Heart right ventricle (tissue), 16 donors: ENCODE measurements at regions of chr4 and their contacts with region 1.

Region 1: DNA sequence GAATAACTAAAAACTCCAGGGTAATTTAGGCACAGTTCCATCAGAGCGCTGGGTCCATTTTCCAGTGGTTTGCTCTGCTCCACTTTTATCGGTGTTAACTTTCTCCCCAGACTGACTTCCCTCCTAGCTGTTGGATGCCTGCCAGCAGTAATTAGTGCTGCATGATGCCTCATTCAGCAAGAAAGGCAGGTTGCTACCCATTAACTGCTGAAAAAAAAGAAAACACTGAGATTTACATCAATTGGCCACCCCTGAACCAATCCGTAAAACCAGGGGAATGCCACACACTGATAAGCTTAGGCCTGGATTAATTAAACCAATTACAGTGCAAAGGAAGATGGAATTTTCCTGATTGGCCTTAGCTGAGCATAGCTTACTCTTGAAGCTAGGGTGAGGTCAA is 182.4 kb upstream of the CXXC4 start:
- DNase-seq: no peak
- ATAC-seq: no peak
- H3K4me3 ChIP-seq: no peak overlapping the region
- H3K27ac ChIP-seq: no peak overlapping the region
- H3K4me1 ChIP-seq: no peaks in the 10 kb centered on the region
- H3K27me3 ChIP-seq: no peaks in the 10 kb centered on the region
- CTCF ChIP-seq: no peak

Region 2: GRCh38 chr4:104549736-104550135 is 127.4 kb before region 1 on chr4:
- intact Hi-C with region 1: loop called in 1 of 10 experiments (anchors 10 kb)
- DNase-seq: no peak
- ATAC-seq: no peak
- H3K4me3 ChIP-seq: no peak overlapping the region
- H3K27ac ChIP-seq: no peak overlapping the region
- H3K4me1 ChIP-seq: no peaks in the 10 kb centered on the region
- H3K27me3 ChIP-seq: no peaks in the 10 kb centered on the region
- CTCF ChIP-seq: no peak